B cell (primary cell): ENCODE measurements at regions of chr10 and their contacts with region 1.

Region 1: DNA sequence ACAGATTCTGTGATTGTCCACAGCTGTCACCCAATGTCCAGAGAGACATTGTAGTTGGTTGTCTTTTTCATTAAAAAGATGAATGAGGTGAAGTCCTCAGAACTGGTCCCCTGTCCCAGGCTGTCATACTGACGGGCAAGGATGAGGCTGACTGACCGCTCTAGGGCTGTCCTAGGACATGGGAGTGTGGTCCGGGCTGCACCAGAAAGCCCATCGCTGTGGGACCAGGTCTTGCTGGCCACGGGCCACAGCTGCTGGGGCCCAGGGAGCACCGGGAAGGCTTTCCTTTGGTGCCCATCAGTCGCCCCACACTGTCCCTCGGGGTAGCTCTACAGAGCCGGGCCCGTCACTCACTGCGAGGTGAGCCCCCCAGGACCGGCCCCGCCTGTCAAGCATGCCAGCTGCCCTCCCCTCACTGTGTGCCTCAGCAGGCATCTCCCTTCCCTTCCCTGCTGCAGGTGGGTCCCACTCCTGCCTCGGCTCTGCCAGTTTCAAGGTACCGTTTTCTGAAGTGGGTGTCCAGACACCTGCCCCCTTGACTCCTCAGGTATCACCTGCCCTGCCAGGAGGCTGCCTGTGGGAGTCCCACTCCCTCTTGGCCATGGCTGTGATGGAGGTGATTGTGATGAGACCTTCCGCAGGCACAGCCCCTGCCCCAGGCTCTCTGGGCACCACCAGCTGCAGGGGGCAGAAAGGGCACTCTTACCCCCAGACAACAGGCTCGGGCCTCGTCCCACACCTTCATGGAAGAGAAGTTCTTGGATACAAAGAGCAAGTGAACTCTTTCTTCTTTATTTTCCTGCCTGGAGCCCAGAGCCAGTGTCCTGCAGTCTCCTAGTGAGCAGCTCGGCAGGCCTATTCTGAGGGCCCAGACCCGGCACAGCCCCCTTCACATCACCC is 21.7 kb downstream of the LRRC27 start:
- DNase-seq: no peak
- ATAC-seq: no peak
- H3K4me3 ChIP-seq: no peak overlapping the region
- H3K4me3 Mint-ChIP-seq: no peak overlapping the region
- H3K27ac ChIP-seq: no peak overlapping the region
- H3K27ac Mint-ChIP-seq: no peak overlapping the region
- H3K4me1 ChIP-seq: peaks cover 0 to 7% of the 10 kb centered on the region in 2 donors
- H3K4me1 Mint-ChIP-seq: peaks cover 5% of the 10 kb centered on the region
- H3K27me3 ChIP-seq: no peaks in the 10 kb centered on the region
- H3K27me3 Mint-ChIP-seq: no peaks in the 10 kb centered on the region
- CTCF ChIP-seq: no peak

Region 2: DNA sequence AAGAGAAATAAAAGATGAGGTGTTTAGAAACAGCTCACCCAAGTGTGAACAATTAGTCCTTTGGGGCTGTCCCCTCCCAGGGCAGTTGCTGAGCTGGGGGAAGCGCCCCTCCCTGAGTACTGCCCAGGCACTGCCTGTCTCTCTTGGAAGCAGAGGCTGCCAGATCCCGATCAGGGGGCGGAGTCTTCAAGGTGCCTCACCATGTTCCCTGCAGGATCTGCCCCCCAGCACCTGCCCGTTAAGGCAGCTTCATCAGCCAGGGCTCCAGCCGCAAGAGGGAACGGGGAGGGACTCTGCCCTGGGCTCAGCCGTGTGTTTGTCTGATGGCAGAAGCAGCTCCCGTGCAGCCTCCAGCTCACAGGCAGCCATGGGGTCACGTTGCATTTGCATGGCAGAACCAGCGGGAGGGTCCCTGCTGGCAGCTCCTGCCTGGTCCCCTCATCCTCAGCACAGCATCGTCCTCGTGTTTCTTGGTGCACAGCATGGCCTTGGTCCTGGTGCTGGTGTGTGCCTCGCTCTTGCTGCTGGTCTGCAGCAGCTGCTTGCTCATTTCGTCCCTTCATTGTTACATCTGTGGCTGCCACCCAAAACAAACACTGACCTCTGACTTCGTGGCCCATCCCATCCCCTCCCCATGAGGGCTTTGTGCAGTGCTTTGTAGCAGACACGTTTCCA is 177.7 kb before region 1 on chr10:
- CTCF ChIA-PET with region 1: no interaction called
- POLR2A ChIA-PET with region 1: no interaction called
- intact Hi-C with region 1: no loop called
- DNase-seq: no peak
- ATAC-seq: no peak
- H3K4me3 ChIP-seq: no peak overlapping the region
- H3K4me3 Mint-ChIP-seq: no peak overlapping the region
- H3K27ac ChIP-seq: no peak overlapping the region
- H3K27ac Mint-ChIP-seq: no peak overlapping the region
- H3K4me1 ChIP-seq: peaks cover 11 to 16% of the 10 kb centered on the region in 2 donors
- H3K4me1 Mint-ChIP-seq: peaks cover 6% of the 10 kb centered on the region
- H3K27me3 ChIP-seq: peaks cover 0 to 42% (median 19%) of the 10 kb centered on the region in 4 experiments
- H3K27me3 Mint-ChIP-seq: peaks cover 32% of the 10 kb centered on the region
- CTCF ChIP-seq: no peak

Region 3: DNA sequence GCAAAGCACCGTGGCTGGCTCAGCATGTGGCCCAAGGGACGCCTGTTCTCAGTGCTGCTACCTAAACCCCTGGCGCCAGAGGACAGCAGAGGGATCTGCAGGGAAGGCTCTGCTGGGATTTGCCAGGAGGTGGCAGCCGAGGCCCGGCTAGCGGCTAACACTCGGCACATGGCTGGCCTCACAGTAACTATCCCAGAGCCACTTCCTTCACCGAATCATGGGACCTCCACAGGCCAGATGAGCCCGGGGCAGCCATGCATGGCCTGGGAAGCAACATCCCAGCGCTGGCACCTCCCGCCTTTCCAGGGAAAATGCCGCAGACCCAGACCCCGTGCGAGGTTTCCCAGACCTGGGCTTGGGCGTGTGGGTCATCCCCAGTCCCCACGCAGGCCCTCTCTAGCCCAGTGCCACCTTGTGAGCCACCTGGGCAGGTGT is 130.5 kb before region 1 on chr10:
- CTCF ChIA-PET with region 1: interaction called, 21 read pairs
- POLR2A ChIA-PET with region 1: no interaction called
- intact Hi-C with region 1: no loop called
- DNase-seq: peak; percentile 72
- ATAC-seq: peak; percentile 86
- H3K4me3 ChIP-seq: no peak overlapping the region
- H3K4me3 Mint-ChIP-seq: no peak overlapping the region
- H3K27ac ChIP-seq: no peak overlapping the region
- H3K27ac Mint-ChIP-seq: no peak overlapping the region
- H3K4me1 ChIP-seq: peaks cover 0 to 9% of the 10 kb centered on the region in 2 donors
- H3K4me1 Mint-ChIP-seq: peaks cover 5% of the 10 kb centered on the region
- H3K27me3 ChIP-seq: no peaks in the 10 kb centered on the region
- H3K27me3 Mint-ChIP-seq: no peaks in the 10 kb centered on the region
- CTCF ChIP-seq: peak; percentile 68

Region 4: GRCh38 chr10:132326925-132327324 is 26.8 kb before region 1 on chr10:
- CTCF ChIA-PET with region 1: no interaction called
- POLR2A ChIA-PET with region 1: no interaction called
- intact Hi-C with region 1: no loop called
- DNase-seq: no peak
- ATAC-seq: no peak
- H3K4me3 ChIP-seq: no peak overlapping the region
- H3K4me3 Mint-ChIP-seq: no peak overlapping the region
- H3K27ac ChIP-seq: no peak overlapping the region
- H3K27ac Mint-ChIP-seq: peak overlapping the region; percentile 27
- H3K4me1 ChIP-seq: peaks cover 12 to 22% of the 10 kb centered on the region in 2 donors
- H3K4me1 Mint-ChIP-seq: peaks cover 54% of the 10 kb centered on the region
- H3K27me3 ChIP-seq: no peaks in the 10 kb centered on the region
- H3K27me3 Mint-ChIP-seq: no peaks in the 10 kb centered on the region
- CTCF ChIP-seq: no peak

Region 5: GRCh38 chr10:132363921-132364593 is 10.4 kb after region 1 on chr10:
- CTCF ChIA-PET with region 1: interaction called, 10 read pairs
- POLR2A ChIA-PET with region 1: no interaction called
- intact Hi-C with region 1: no loop called
- DNase-seq: no peak
- ATAC-seq: peak; percentile 43
- H3K4me3 ChIP-seq: no peak overlapping the region
- H3K4me3 Mint-ChIP-seq: no peak overlapping the region
- H3K27ac ChIP-seq: no peak overlapping the region
- H3K27ac Mint-ChIP-seq: no peak overlapping the region
- H3K4me1 ChIP-seq: no peaks in the 10 kb centered on the region
- H3K4me1 Mint-ChIP-seq: no peaks in the 10 kb centered on the region
- H3K27me3 ChIP-seq: no peaks in the 10 kb centered on the region
- H3K27me3 Mint-ChIP-seq: no peaks in the 10 kb centered on the region
- CTCF ChIP-seq: no peak